GM10248 (cell line): ENCODE measurements at regions of chr3 and their contacts with region 1.

Region 1: DNA sequence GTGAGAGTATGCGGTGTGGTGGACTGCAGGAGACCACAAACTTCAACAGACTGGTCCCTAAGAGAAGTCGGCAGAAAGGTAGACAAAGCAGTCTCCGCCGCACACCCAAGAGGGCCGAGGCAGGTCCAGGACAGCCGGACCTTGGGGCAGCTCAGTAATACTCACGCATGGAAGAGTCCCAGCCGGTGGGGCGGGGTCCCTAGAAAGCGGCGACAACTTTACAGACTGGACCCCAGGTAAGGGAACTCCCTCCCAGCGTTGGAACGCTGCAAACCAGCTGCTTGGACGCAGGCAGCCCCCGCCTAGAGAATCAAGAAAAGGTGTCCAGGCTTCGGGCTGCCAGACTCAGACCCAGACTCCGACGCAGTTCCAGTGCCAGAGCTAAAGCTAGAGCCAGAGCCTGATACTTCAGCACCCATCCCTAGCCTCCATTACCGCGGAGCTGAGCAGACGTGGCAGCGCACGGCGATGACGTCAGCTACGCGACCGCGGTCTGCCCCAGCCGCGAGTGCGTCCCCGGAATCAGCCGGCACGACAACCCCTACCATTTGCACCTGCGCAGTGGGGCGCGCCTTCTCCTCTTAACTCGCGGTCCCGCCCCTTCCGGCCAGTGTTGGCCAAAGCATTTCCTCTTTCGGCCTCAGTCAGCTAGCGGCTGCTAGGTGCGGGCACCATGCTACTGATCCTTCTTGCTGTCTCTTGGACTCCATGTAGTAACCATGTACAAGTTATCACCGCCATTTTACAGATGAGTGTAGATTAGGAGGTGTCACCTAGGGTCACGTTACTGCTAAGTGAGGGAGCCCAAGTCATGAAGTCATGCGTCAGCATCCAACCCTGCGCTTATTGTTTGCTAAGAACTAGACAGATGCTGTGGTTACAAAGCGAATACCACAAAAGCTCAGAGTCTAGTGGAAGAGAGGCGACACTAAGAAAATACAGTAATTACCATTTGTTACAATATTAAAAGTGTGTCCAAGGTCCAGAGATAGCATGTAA is at the start of gene TMEM39A:
- DNase-seq: peak; percentile 99
- CTCF ChIP-seq: no peak

Region 2: GRCh38 chr3:119443179-119443578 is 20.3 kb before region 1 on chr3:
- CTCF ChIA-PET with region 1: interaction called, 21 read pairs
- POLR2A ChIA-PET with region 1: no interaction called
- DNase-seq: no peak
- CTCF ChIP-seq: no peak

Region 3: GRCh38 chr3:119745942-119746341 is 282.5 kb after region 1 on chr3:
- CTCF ChIA-PET with region 1: no interaction called
- POLR2A ChIA-PET with region 1: no interaction called
- DNase-seq: no peak
- CTCF ChIP-seq: no peak